Activated CD4-positive, alpha-beta T cell treated with anti-CD3 and anti-CD28 coated beads, Interleukin-2, amount 10 ng/mL, durations not matched to agents 24 days and 14 days (primary cell): ENCODE measurements at regions of chr2 and their contacts with region 1.

Region 1: DNA sequence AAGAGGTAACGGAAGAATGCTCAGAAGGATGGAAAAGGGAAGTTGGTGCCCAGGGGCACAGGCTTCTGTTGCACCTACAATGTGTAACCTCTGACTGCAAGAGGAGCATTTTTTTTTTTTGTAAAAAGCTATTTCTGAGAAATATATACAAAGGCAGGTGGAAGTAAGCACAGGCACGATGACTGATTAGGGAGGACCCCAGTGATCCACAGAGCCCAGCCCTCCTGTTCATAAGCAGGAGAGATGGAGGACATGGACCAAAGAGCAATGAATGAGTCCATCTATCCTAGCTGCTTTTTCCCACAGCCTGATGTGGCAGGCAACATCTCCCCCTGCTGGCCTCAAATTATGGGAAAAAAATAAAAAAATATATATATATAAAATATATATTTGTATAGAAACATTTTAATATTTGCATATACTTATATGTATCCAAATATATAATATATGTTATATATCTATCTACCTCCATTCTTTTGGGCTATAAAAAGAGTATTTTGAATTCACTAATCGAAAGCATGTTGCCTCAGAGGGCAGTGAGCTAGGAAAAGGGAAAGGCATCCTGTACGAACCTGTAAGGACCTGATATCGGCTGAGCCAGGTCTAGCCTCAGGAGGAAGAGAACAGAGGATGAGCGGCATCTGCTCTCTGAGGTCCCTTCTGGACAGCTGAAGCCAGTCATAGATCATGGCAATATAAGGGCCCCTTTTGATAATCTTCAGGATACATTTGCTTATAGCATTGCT is 166.0 kb upstream of the STK17B start:
- DNase-seq: peak; percentile 68
- H3K4me3 Mint-ChIP-seq: no peak overlapping the region
- H3K27ac Mint-ChIP-seq: no peak overlapping the region
- H3K4me1 Mint-ChIP-seq: peaks cover 3% of the 10 kb centered on the region
- H3K27me3 Mint-ChIP-seq: peaks cover 10% of the 10 kb centered on the region

Region 2: GRCh38 chr2:196291873-196292800 is 45.2 kb before region 1 on chr2:
- intact Hi-C with region 1: loop called (anchors 5 kb)
- DNase-seq: no peak
- H3K4me3 Mint-ChIP-seq: no peak overlapping the region
- H3K27ac Mint-ChIP-seq: no peak overlapping the region
- H3K4me1 Mint-ChIP-seq: peaks cover 39% of the 10 kb centered on the region
- H3K27me3 Mint-ChIP-seq: no peaks in the 10 kb centered on the region